Activated T-helper 1 cell treated with anti-CD3 and anti-CD28 coated beads, Interleukin-12 subunit alpha, Interleukin-12 subunit beta, Interleukin-2, Interleukin-4 antibody, amounts not matched to agents 30 ng/mL and 10 ng/mL and 1 ng/mL, durations not matched to agents 14 hours and 24 hours and 36 hours (primary cell): ENCODE measurements at regions of chr4 and their contacts with region 1.

Region 1: DNA sequence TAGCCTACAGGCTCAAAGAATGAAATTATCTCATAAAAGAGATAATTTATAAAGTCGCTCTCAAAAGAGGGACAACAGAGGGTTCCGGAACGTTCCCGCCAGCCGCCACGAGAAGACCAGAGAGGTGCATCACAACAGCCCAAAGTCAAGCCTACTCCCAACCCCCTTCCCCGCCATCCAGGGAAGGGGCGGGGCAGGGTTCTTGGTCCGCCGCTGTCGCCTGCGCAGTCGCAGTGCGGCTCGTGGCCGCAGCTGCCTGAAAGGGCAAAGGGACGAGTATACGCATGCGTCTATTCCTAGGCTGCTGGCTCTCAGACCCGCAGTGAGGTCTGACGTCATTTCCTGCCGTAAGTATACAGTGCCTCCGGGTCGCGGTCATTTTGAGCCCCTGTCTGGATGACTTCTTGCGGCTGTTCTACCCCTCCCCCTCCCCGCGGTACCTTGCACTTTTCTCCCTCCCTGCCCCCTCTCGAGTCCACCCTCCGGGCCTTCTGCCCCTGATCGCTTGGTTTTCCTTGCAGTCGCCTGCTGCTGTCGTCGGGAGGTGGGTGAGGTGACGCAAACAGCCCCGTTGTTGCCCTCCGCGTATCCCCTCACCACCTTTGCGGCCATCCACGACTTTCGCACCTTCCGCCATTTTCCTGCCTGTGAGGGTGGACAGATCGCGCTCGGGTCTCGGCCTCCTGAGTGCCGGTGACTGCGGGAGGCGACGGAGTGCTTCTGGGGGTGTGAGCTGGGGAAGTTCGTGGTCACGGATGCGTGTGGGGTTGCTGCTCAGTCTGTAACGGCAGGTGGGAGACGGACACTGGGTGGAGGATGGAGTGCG is at the start of gene OCIAD1:
- DNase-seq: peak; percentile 94
- H3K4me3 Mint-ChIP-seq: peak within 1 kb of the TSS; percentile 99
- H3K27ac Mint-ChIP-seq: peak within 1 kb of the TSS; percentile 100
- H3K4me1 Mint-ChIP-seq: peaks cover 26% of the 10 kb centered on the region
- H3K27me3 Mint-ChIP-seq: peaks cover 2% of the 10 kb centered on the region
- total RNA-seq, gene OCIAD1: 120 and 122 TPM in 2 replicates

Region 2: DNA sequence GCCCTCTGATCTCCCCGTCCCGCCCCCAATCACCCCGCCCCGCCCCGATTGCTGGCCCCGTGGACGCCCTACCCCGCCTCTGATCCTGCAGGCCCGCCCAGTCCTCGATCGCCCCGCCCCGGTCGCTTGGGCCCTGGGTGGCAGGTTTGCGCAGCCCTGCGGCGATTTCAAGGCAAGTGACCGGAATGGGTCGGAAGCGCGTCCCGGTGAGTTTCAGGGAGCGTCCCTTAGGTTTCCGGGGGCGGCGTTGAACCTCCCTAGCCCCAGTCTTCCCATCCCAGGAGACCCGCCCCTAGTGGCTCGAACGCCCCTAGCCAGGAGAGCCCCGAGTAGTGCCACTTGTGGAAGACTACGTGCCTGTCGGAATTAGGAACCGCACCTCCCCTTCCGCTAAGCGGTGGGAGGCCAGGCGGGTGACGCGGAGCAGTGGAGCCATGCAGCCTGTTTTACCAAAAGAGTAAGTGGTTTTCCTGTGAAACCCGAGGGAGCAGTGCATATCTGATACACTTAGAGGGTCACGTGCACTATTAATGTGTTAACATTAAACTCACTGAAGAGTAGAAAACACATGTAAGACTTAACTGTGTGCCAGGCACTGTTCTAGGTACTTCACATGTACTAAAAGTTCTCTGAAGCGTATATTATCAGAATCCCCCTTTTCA is 560.9 kb before region 1 on chr4:
- intact Hi-C with region 1: loop called (anchors 1 kb)
- DNase-seq: peak; percentile 78
- H3K4me3 Mint-ChIP-seq: peak overlapping the region; percentile 89
- H3K27ac Mint-ChIP-seq: peak overlapping the region; percentile 74
- H3K4me1 Mint-ChIP-seq: peaks cover 16% of the 10 kb centered on the region
- H3K27me3 Mint-ChIP-seq: no peaks in the 10 kb centered on the region

Region 3: DNA sequence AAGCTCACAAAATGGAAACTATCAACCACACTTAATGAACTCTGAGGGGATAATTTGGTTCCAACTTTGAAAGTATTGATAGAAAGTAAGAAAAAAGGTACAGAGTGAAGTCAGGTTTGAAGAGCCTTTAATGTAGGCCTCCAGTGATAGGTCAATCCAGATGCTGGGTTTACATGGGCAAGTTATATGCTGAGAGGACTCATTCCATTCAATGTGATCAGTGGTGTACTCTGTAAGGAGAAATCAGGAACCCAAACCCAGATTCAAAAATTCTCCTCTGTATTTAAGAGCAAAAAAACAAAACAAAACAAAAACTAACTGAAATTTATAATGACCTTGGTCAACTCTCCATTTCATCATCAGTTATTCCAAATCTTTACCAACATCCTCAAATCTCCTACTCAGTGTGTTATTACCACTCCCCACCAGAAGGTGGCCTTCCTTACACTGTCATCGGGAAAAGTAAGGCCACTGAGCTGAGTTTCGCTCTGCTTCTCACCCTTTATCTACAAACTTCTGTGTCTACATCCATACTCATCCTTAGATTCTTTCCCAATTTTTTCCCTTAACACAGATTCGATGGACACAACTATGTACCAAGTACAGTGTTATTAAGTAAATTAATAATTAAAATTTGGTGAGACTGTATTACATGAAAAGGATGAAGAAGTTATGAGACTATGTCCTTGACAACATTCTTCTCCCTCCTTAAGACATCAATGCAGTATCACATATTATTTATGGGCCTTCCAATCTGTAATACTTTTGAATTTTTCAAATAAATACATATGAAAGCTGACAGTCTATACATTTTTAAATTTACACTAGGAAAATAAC is 252.6 kb before region 1 on chr4:
- intact Hi-C with region 1: loop called (anchors 2 kb)
- DNase-seq: peak; percentile 17
- H3K4me3 Mint-ChIP-seq: no peak overlapping the region
- H3K27ac Mint-ChIP-seq: peak overlapping the region; percentile 6
- H3K4me1 Mint-ChIP-seq: peaks cover 10% of the 10 kb centered on the region
- H3K27me3 Mint-ChIP-seq: no peaks in the 10 kb centered on the region

Region 4: GRCh38 chr4:48698029-48698971 is 132.6 kb before region 1 on chr4:
- intact Hi-C with region 1: loop called (anchors 2 kb)
- DNase-seq: no peak
- H3K4me3 Mint-ChIP-seq: no peak overlapping the region
- H3K27ac Mint-ChIP-seq: no peak overlapping the region
- H3K4me1 Mint-ChIP-seq: peaks cover 33% of the 10 kb centered on the region
- H3K27me3 Mint-ChIP-seq: no peaks in the 10 kb centered on the region

Region 5: DNA sequence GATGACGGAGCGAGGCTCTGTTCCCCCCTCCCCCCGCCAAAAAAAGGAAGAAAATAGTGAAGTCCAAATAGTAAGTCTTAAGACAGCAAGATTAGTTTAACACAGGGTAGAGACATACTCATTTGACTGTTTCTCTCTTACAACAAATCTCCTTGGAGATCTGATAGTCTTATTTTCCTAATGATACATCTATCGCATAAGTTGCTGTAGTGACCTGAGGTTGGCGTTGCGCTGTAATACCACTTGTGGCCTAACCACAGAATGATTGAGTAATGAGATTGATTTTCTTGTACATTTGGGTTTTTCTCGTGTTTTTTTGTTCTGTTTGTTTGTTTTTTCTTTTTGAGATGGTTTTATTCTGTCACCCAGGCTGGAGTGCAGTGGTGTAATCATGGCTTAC is 27.2 kb after region 1 on chr4:
- intact Hi-C with region 1: loop called (anchors 2 kb)
- DNase-seq: no peak
- H3K4me3 Mint-ChIP-seq: no peak overlapping the region
- H3K27ac Mint-ChIP-seq: no peak overlapping the region
- H3K4me1 Mint-ChIP-seq: no peaks in the 10 kb centered on the region
- H3K27me3 Mint-ChIP-seq: no peaks in the 10 kb centered on the region

Region 6: DNA sequence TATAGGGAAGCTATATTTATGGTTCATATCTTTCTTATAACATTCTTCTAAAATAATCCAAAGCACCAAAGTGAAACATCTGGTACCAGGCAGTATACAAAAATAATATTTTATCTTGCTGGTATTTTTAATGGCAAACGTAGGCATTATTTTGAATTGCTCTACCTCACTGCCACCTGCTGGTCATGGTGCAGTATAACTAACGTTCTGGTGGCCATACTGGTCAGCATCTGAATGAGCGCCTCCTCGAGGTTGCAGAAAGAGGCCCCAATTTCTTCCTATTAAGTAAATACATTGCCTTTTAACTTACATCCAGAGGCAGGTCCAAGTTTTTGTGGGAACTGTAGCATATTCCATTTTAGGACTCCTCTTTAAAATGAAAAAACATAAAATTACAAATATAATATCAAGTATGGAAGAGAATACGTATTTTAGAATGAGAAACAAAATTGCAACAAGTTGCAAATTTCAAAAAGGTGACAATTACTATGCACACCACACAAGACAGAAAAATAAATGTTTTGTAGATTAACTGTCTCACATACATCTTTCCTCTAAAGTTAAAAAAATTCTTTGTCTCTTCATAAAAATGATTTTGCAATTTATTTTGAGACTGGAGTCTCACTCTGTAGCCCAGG is 132.2 kb after region 1 on chr4:
- intact Hi-C with region 1: loop called (anchors 1 kb)
- DNase-seq: peak; percentile 54
- H3K4me3 Mint-ChIP-seq: no peak overlapping the region
- H3K27ac Mint-ChIP-seq: no peak overlapping the region
- H3K4me1 Mint-ChIP-seq: no peaks in the 10 kb centered on the region
- H3K27me3 Mint-ChIP-seq: peaks cover 4% of the 10 kb centered on the region